ENCODE measurements at regions of chr11 and their contacts with region 1.

Region 1: GRCh38 chr11:12888525-12889158 is 120.5 kb upstream of the RASSF10 start:
- DNase-seq: peak; percentile 78
- CTCF ChIP-seq: peak; percentile 63

Region 2: GRCh38 chr11:12331239-12331874 is 557.3 kb before region 1 on chr11:
- in situ Hi-C with region 1: loop called (anchors 25 kb)
- DNase-seq: peak; percentile 40
- CTCF ChIP-seq: peak; percentile 62

Region 3: DNA sequence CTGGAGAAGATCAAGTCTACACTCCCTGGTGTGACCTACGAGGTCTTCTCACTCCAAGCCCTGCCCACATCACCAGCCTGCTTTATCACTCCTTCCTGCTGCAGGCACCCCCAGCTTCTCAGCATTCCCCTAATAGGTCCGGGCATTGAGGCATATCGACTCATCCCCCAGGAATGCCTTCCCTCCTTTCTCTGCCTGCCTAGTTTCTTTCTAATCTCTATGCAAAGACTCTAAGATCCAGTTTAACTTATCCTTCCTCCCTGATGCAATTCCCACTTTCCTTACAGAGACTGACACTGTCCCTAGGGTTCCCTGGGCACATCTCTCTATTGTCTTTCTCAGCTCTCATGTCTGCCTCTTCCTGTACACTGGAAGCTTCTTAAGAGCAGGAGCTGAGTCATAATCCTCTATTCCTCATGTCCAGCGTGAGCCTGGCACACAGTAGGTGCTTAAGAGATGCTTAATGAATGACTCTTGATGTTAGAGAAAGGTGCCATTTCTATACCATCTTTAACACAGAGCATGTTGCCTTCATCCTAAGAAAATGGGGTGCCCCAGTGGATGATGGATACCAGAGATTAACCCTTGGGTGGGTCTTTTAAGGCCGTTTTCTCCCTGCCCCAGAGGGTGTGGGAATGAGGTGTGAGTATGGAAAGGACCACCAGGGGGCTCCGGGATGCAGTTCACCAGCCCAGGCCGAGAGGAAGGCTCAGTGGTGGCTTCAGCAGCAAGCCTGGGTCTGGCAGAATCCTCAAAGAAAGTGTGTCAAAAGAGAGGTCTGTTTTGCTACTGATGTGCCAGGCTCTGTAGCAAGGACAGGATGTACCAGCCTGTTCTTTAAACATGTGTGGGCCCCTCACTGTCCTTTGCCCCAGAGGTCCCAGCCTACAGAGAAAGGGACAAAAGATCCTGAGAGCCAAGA is 476.6 kb before region 1 on chr11:
- in situ Hi-C with region 1: loop called (anchors 25 kb)
- DNase-seq: peak; percentile 38
- CTCF ChIP-seq: peak; percentile 4

Region 4: DNA sequence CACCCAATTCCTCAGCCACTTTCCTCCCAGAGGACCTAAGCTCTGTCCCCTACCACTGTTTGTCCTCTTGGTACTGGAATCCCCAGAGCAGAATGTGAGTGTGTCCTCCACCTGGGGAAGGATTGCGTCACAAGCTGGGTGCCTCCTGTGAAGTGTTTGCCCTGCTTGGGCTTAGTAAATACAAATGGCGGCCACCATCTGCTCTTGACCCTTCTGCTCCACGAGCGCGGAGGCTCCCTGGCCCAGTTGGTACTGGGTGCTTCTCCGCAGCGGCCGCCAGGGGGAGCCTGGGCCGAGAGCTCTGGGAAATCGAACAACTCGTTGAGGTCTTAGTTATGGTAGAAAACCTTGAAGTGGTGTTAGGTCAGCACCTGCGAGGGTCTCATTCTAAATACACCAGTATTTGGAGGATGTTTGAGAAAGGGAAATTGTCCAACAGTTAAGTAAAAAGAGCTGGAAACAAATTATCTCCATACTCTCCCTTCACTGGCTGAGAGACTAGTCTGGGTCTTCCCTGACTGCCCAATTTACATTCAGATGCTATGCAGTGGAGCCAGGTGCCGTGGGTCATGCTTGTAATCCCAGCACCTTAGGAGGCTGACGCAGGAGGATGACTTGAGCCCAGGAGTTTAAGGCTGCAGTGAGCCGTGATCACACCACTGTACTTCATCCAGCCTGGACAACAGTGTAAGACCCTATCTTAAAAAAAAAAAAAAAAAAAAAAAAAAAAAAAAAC is 289.1 kb before region 1 on chr11:
- in situ Hi-C with region 1: loop called (anchors 10 kb)
- DNase-seq: peak; percentile 61
- CTCF ChIP-seq: peak; percentile 72